Psoas muscle (tissue), 8 donors: ENCODE measurements at regions of chr16 and their contacts with region 1.

Region 1: DNA sequence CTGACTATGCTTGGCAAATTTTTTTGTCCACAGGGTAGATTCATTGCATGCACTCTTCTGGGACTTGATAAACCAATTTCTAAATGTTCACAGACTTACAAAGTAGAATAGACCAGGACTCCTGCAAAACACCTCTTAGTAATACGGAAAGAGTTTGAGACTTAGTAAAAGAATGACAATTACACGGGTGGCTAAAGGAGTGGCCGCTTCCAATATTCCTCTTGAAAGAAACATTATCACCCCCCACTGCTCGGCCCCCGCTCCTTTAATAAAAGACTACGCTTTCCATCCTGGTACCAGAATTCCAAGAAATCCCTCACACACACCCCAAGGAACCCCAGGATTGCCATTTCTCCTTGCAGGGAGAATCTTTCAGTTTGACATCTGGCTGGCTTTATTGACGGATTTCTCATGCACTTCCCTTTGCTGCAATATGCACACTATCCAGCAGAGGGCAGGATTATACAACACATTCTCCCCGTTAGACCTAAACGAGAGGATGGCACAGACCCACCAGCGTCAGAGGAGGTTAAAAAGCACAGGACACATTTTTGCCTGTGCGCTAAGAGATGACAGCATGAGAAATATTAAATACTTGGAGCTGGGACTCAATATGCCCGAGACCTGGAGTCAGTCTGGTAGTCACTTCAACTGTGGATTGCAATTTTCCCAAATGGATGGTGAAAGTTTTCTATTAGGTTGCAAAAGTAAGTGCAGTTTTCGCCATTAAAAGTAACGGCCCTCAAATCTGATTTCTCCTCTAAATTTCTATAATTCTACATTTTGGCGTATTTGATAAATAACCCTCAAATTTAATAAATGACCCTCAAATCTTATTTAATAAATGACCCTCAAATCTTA is 46.6 kb upstream of the NUDT7 start:
- DNase-seq: peak; percentile 25 to 52
- ATAC-seq: peak; percentile 70 to 79 (median 75)
- H3K4me3 ChIP-seq: no peak overlapping the region
- H3K27ac ChIP-seq: no peak overlapping the region
- H3K4me1 ChIP-seq: no peaks in the 10 kb centered on the region
- H3K27me3 ChIP-seq: peaks cover 0 to 2% (median 0%) of the 10 kb centered on the region in 3 donors
- CTCF ChIP-seq: peak; percentile 92

Region 2: GRCh38 chr16:77613095-77613494 is 62.6 kb before region 1 on chr16:
- intact Hi-C with region 1: no loop called
- DNase-seq: no peak
- ATAC-seq: no peak
- H3K4me3 ChIP-seq: no peak overlapping the region
- H3K27ac ChIP-seq: no peak overlapping the region
- H3K4me1 ChIP-seq: no peaks in the 10 kb centered on the region
- H3K27me3 ChIP-seq: no peaks in the 10 kb centered on the region
- CTCF ChIP-seq: no peak

Region 3: GRCh38 chr16:77624085-77624484 is 51.6 kb before region 1 on chr16:
- intact Hi-C with region 1: no loop called
- DNase-seq: no peak
- ATAC-seq: no peak
- H3K4me3 ChIP-seq: no peak overlapping the region
- H3K27ac ChIP-seq: no peak overlapping the region
- H3K4me1 ChIP-seq: no peaks in the 10 kb centered on the region
- H3K27me3 ChIP-seq: no peaks in the 10 kb centered on the region
- CTCF ChIP-seq: no peak

Region 4: DNA sequence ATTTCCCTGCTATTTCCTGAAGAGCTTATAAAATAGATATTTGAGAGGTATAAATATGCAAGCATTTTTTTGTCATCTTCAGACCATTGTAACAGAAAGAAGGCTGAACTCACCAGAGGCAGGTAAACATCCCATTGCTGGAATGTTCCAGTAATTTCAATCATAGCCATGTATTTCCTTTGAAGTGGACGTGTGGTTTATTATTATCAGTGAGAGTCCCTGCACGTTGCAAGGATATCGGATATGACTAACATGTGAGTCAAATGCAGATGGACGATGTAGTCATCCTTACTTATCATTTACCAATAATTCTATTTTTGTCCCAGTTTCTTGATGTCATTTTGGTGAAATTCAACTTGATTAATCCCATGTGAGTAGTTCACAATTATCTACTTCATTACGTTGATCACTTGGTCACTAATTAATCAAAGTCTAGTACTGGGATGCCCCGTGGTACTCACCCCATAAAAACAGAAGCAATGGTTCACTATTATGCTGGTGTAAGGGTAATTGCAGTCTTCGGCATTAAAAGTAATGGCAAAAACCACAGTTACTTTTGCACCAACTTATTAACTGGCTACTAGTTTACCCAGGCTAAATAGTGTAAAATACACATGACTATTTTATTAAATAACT is 202.1 kb after region 1 on chr16:
- intact Hi-C with region 1: no loop called
- DNase-seq: no peak
- ATAC-seq: no peak
- H3K4me3 ChIP-seq: no peak overlapping the region
- H3K27ac ChIP-seq: no peak overlapping the region
- H3K4me1 ChIP-seq: no peaks in the 10 kb centered on the region
- H3K27me3 ChIP-seq: no peaks in the 10 kb centered on the region
- CTCF ChIP-seq: no peak

Region 5: DNA sequence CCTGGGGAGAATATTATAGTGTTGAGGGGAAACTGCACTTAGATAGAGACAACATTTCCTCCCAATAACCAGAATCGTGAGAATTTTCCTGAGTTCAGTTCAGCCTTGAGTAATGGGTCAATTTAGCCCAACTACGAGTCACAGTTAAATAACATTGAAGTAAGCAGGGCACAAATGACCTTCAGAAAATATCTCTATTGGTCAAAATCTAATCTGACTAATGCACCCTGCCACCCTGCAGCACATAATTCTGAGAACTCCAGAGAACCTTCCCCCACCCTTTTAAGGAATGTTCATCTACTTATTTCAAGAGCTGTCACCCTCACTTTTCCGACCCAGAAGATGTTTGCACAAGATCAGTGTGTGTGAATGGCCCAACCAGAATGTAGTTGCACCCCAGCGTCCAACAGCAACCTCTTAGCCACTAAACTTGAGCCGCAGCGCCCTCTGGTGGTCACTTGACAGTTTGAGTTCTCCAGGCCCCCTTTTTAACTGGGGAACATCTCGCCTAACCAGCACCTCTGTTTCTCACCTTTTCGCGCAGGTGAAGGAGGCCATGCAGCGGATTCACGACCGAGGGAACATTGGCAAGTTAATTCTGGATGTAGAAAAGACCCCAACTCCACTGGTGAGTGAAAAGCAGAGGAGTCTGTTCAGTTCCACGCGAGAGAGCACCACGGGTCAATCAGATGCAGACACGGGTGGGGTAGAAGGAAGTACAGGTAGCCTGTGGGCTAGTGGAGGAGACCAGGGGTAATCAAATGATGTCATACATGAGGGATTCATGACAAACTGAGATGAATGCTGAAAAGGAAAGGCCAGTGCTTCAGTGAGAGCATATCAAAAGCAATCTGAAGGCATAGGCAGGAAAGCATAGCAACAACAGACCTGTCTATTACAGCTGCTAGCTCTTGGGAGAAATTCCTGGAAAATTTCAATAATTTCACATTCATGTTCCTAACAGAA is 295.9 kb after region 1 on chr16:
- intact Hi-C with region 1: loop called (anchors 1 to 5 kb)
- DNase-seq: peak; percentile 76 to 83
- ATAC-seq: peak in 3 of 4 donors; percentile 42 to 69 (median 45)
- H3K4me3 ChIP-seq: no peak overlapping the region
- H3K27ac ChIP-seq: no peak overlapping the region
- H3K4me1 ChIP-seq: no peaks in the 10 kb centered on the region
- H3K27me3 ChIP-seq: no peaks in the 10 kb centered on the region
- CTCF ChIP-seq: peak; percentile 76

Region 6: GRCh38 chr16:78002915-78003538 is 327.3 kb after region 1 on chr16:
- intact Hi-C with region 1: loop called (anchors 10 kb)
- DNase-seq: peak; percentile 78 to 87
- ATAC-seq: peak; percentile 69 to 85 (median 83)
- H3K4me3 ChIP-seq: no peak overlapping the region
- H3K27ac ChIP-seq: no peak overlapping the region
- H3K4me1 ChIP-seq: no peaks in the 10 kb centered on the region
- H3K27me3 ChIP-seq: peaks cover 0 to 2% (median 0%) of the 10 kb centered on the region in 3 donors
- CTCF ChIP-seq: peak; percentile 79

Region 7: GRCh38 chr16:78099372-78100161 is 423.9 kb after region 1 on chr16 and contains the start of gene WWOX:
- intact Hi-C with region 1: loop called in 1 of 2 experiments (anchors 5 kb)
- DNase-seq: peak; percentile 96 to 98
- ATAC-seq: peak; percentile 96 to 97 (median 96)
- H3K4me3 ChIP-seq: peak within 1 kb of the TSS; percentile 82
- H3K27ac ChIP-seq: peak within 1 kb of the TSS; percentile 78
- H3K4me1 ChIP-seq: peaks cover 6% of the 10 kb centered on the region
- H3K27me3 ChIP-seq: peaks cover 0 to 4% (median 0%) of the 10 kb centered on the region in 3 donors
- CTCF ChIP-seq: peak; percentile 75
- total RNA-seq, gene WWOX: 3.7 to 6.6 (median 5.5) TPM